CD14-positive monocyte (primary cell): ENCODE measurements at regions of chr20 and their contacts with region 1.

Region 1: DNA sequence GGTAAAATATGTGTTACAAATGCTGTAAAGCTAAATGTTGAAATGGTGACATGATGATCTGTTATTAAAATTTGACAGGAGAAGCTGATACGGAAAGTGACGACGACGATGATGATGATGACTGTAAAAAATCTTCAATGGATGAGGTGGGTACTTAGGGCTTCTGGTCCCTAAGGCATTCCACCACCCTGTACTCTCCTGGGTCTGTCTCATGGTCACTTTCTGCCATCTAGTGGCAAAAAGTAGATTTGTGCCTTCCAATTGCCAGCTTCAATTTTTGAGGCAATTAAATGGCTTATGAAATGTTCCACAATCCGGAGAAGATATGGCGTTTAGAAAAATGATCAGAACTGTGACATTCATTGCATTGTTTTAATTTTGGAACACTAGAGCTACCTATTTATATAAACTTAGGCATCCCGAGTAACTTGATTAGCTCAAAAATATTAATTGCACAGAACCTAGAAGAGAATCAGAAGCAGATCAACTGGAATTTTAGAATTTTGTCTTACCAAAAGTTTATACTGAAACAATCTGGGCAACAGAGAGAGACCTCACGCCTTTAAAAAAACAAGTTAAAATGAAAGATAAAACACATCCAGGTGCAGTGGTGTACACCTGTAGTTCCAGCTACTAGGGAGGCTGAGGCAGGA is 346.5 kb upstream of the PLCB4 start:
- DNase-seq: peak; percentile 51 to 72 (median 65)
- H3K4me3 ChIP-seq: no peak overlapping the region
- H3K4me3 Mint-ChIP-seq: no peak overlapping the region
- H3K27ac ChIP-seq: no peak overlapping the region
- H3K27ac Mint-ChIP-seq: no peak overlapping the region
- H3K4me1 ChIP-seq: peaks cover 6 to 7% of the 10 kb centered on the region in 2 donors
- H3K4me1 Mint-ChIP-seq: peaks cover 16% of the 10 kb centered on the region
- H3K27me3 ChIP-seq: no peaks in the 10 kb centered on the region
- H3K27me3 Mint-ChIP-seq: no peaks in the 10 kb centered on the region
- CTCF ChIP-seq: peak; percentile 80

Region 2: DNA sequence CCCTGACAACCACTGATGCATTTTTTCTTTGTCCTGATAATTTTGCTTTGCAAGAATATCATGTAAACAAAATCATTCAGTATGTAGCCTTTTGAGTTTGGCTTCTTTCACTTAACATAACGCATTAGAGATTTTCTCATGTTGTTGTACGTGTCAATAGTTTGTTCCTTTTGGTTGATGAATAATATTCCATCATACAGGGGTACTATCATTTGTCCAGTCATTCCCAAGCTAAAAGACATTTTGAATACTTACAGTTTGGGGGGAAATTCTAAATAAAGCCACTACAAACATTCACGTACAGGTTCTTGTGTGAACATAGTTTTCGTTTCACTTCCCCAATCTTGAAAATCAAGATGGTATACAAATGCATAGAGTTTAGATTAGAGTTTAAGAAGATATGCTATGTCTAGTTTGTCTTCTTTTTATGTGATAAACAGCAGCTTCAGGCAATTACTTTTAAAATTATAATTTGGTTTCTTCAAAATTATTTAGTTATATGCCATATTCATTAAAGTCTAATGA is 787.3 kb before region 1 on chr20:
- intact Hi-C with region 1: loop called in 1 of 2 experiments (anchors 5 kb)
- DNase-seq: peak in 2 of 3 donors; percentile 16 to 29
- H3K4me3 ChIP-seq: peak overlapping the region in 2 of 3 experiments; percentile 40 to 61
- H3K4me3 Mint-ChIP-seq: peak overlapping the region; percentile 42 to 76
- H3K27ac ChIP-seq: no peak overlapping the region
- H3K27ac Mint-ChIP-seq: no peak overlapping the region
- H3K4me1 ChIP-seq: peaks cover 10 to 11% of the 10 kb centered on the region in 2 donors
- H3K4me1 Mint-ChIP-seq: peaks cover 22% of the 10 kb centered on the region
- H3K27me3 ChIP-seq: no peaks in the 10 kb centered on the region
- H3K27me3 Mint-ChIP-seq: peaks cover 0 to 3% (median 0%) of the 10 kb centered on the region in 3 donors
- CTCF ChIP-seq: no peak

Region 3: DNA sequence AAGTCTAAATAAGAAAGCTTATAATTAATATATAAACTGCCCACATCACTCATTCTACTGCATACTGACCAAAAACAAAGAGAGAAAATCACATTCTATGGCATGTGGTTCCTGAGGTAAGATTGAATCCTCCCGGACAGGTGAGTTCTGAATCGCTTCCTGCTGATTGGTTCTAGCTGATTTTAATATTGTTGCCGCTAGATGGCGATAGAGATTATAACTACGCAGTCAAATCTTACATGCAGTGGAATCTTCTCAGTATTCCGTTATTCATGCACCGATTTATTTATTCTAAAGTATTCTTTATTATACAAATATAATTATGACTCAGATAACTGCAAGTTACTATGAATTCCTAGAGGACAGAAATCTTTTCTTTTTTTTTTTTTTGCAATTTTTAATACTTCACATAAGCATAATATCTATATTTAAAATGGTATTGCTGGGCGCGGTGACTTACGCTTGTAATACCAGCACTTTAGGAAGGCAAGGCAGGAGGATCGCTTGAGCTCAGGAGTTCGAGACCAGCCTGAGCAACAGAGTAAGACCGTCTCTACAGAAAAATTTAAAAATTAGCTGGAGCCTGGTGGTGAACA is 678.6 kb before region 1 on chr20:
- intact Hi-C with region 1: loop called (anchors 2 to 5 kb)
- DNase-seq: peak; percentile 39 to 74 (median 57)
- H3K4me3 ChIP-seq: no peak overlapping the region
- H3K4me3 Mint-ChIP-seq: no peak overlapping the region
- H3K27ac ChIP-seq: no peak overlapping the region
- H3K27ac Mint-ChIP-seq: no peak overlapping the region
- H3K4me1 ChIP-seq: no peaks in the 10 kb centered on the region
- H3K4me1 Mint-ChIP-seq: peaks cover 1% of the 10 kb centered on the region
- H3K27me3 ChIP-seq: no peaks in the 10 kb centered on the region
- H3K27me3 Mint-ChIP-seq: no peaks in the 10 kb centered on the region
- CTCF ChIP-seq: peak; percentile 77